Activated CD8-positive, alpha-beta T cell treated with anti-CD3 and anti-CD28 coated beads, Interleukin-2, amount 10 ng/mL, durations not matched to agents 7 days and 5 days (primary cell): ENCODE measurements at regions of chr2 and their contacts with region 1.

Region 1: GRCh38 chr2:157628477-157629415 is at the start of gene ACVR1C:
- DNase-seq: peak; percentile 75
- ATAC-seq: peak; percentile 95
- H3K4me3 Mint-ChIP-seq: peak within 1 kb of the TSS; percentile 81
- H3K27ac Mint-ChIP-seq: no peak within 1 kb of the TSS
- H3K4me1 Mint-ChIP-seq: peaks cover 26% of the 10 kb centered on the region
- H3K27me3 Mint-ChIP-seq: peaks cover 15% of the 10 kb centered on the region
- total RNA-seq, gene ACVR1C: 0.63 to 0.73 TPM

Region 2: DNA sequence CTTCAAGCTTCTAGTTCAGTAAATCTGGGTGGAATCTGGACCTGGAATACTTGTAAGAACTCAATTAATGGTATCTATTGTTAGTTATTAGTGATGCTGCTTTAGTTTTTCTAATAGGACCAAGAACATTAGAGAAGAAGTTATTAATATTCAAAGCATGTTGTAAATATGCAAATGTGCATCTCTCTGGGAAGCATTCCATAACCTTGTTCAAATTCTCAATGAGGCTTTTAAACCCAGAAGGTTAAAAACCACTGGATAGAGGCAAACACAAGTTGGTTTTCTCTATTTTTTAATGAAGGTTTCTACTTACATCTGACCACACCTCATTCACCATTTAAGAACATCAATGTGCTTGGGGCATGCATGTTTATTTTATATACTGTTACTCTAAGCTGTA is 16.0 kb after region 1 on chr2:
- CTCF ChIA-PET with region 1: interaction called, 22 read pairs
- POLR2A ChIA-PET with region 1: interaction called, 3 read pairs
- DNase-seq: no peak
- ATAC-seq: no peak
- H3K4me3 Mint-ChIP-seq: no peak overlapping the region
- H3K27ac Mint-ChIP-seq: no peak overlapping the region
- H3K4me1 Mint-ChIP-seq: no peaks in the 10 kb centered on the region
- H3K27me3 Mint-ChIP-seq: peaks cover 10% of the 10 kb centered on the region

Region 3: GRCh38 chr2:157751462-157752058 is 122.8 kb after region 1 on chr2:
- CTCF ChIA-PET with region 1: interaction called, 13 read pairs
- POLR2A ChIA-PET with region 1: no interaction called
- DNase-seq: peak; percentile 32
- ATAC-seq: no peak
- H3K4me3 Mint-ChIP-seq: no peak overlapping the region
- H3K27ac Mint-ChIP-seq: no peak overlapping the region
- H3K4me1 Mint-ChIP-seq: peaks cover 32% of the 10 kb centered on the region
- H3K27me3 Mint-ChIP-seq: no peaks in the 10 kb centered on the region